Posterior vena cava (tissue), 2 donors: ENCODE measurements at regions of chr12 and their contacts with region 1.

Region 1: DNA sequence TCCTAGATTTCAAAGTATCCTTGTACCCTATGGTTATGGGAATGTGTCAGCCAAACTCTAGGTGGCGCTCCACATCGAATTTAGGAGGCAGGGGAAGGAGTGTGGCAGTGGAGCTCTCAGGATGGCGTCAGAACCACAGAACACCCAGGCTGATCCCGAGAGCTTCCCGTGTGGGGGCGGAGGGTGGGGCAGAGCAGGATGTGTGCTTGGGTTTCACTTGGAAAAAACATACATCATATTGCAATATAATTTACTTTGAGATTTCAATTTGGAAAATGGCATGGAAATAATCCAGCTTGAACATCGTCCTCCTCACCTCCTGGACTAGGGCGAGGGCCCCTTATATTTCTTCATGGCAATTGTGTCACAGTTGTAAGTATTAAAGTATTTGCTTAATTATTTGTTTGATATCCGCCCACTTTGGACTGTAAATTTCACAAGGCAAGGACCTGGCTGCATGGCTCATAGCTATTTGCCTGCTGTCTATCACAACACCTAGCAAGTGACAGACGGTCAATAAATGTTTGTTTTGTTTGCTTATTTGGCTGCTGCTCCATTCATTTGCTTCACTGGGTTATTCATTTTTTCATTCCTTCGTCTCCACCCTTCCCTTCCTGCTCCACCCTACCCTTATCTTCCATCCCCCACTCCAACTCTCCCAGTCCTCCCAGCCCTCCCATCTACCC is 221.5 kb upstream of the HMGA2 start:
- DNase-seq: peak; percentile 89

Region 2: GRCh38 chr12:64293654-64294364 is 1308.9 kb before region 1 on chr12:
- intact Hi-C with region 1: no loop called
- DNase-seq: no peak

Region 3: GRCh38 chr12:66080791-66081190 is 478.0 kb after region 1 on chr12:
- intact Hi-C with region 1: loop called in 1 of 2 experiments (anchors 5 kb)
- DNase-seq: no peak